Common myeloid progenitor, CD34-positive (primary cell): ENCODE measurements at regions of chr20 and their contacts with region 1.

Region 1: DNA sequence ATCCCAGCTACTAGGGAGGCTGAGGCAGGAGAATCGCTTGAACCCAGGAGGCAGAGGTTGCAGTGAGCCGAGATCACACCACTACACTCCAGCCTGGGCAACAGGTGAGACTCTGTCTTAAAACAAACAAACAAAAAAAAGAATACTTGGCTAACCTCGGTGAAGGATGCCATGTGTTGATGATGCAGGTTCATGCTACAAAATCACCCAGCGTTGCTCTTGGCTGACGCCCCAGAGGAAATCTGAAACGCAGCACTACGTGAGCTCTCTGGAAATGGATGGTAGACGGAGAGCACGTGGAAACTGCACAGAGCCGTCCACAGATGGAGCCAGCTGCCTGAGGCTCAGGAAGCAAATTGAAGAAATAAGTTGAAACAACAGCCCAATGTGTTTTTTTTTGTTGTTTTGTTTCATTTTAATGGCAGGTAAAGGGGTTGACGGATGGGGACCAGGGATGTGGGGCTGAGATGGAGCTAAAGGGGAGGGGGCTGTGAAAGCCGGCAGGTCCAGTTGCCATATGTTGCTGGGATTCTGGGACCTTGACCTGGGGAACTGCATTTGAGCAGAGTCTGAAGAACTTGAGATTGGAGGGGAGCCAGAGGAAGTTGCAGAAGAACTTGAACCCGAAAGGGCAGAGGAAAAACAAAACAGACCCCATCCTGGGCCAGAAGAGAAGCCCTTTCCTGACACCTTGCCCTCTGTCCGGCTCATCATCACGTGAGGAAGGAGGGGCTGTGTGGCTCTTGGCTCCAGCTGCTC is 12.8 kb upstream of the MANBAL start:
- DNase-seq: peak; percentile 72 to 87 (median 83)
- H3K4me3 ChIP-seq: peak overlapping the region in 3 of 7 experiments; percentile 36 to 57 (median 46)
- H3K27ac ChIP-seq: no peak overlapping the region
- H3K4me1 ChIP-seq: peaks cover 14 to 45% (median 33%) of the 10 kb centered on the region in 4 experiments
- H3K27me3 ChIP-seq: no peaks in the 10 kb centered on the region

Region 2: GRCh38 chr20:37095599-37096414 is 180.9 kb before region 1 on chr20 and contains the start of gene RBL1:
- CTCF ChIA-PET with region 1: no interaction called
- POLR2A ChIA-PET with region 1: no interaction called
- DNase-seq: peak; percentile 88 to 94 (median 92)
- H3K4me3 ChIP-seq: peak within 1 kb of the TSS; percentile 66 to 91 (median 76)
- H3K27ac ChIP-seq: peak within 1 kb of the TSS; percentile 81 to 89
- H3K4me1 ChIP-seq: peaks cover 0 to 25% (median 17%) of the 10 kb centered on the region in 4 experiments
- H3K27me3 ChIP-seq: no peaks in the 10 kb centered on the region

Region 3: GRCh38 chr20:37288091-37288490 is 11.4 kb after region 1 on chr20:
- CTCF ChIA-PET with region 1: interaction called, 39 read pairs
- POLR2A ChIA-PET with region 1: interaction called, 3 read pairs
- DNase-seq: peak in 1 of 3 donors; percentile 31
- H3K4me3 ChIP-seq: no peak overlapping the region
- H3K27ac ChIP-seq: no peak overlapping the region
- H3K4me1 ChIP-seq: peaks cover 0 to 24% (median 15%) of the 10 kb centered on the region in 4 experiments
- H3K27me3 ChIP-seq: no peaks in the 10 kb centered on the region

Region 4: GRCh38 chr20:37384683-37385174 is 108.1 kb after region 1 on chr20:
- CTCF ChIA-PET with region 1: interaction called, 14 read pairs
- POLR2A ChIA-PET with region 1: interaction called, 5 read pairs
- DNase-seq: peak; percentile 58 to 74 (median 72)
- H3K4me3 ChIP-seq: peak overlapping the region in 4 of 7 experiments; percentile 34 to 66 (median 58)
- H3K27ac ChIP-seq: no peak overlapping the region
- H3K4me1 ChIP-seq: peaks cover 0 to 29% (median 20%) of the 10 kb centered on the region in 4 experiments
- H3K27me3 ChIP-seq: no peaks in the 10 kb centered on the region

Region 5: DNA sequence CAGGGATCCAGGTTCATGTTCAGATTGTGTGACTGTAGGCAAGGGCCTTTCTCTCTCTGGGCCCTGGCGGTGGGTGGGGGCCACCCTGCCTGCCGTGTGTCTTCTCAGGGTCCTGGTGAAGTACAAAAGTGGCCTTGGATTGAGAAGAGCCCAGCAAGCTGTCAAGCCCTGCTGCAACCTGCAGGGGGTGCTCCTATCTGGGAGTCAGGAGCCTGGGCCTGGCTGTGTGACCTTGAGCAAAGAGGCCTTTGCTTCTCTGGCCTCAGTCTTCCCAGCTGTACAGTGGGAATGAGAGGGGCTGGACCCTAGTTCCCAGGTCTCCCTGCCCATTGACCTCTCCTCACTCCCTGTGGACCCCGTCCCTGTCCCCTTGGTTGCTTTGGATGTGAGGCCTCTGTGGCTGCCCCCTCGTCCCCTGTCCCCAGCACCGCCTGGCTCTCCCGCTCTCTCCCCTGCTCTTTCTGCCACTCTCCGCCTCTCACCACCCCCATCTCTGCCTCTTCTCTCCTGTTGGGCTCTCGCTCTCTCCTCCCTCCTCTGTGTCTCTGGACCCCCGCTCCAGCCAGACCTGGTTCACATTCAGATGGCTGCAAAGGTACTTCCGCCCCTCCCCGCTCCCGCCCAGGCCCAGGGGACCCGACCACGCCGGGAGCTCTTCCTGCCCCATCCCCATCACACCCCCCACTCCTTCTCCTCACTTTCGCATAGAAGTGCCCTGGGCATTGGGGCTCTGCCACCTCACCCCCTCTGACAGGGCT is 115.9 kb after region 1 on chr20:
- CTCF ChIA-PET with region 1: interaction called, 12 read pairs
- POLR2A ChIA-PET with region 1: no interaction called
- DNase-seq: peak in 1 of 3 donors; percentile 34
- H3K4me3 ChIP-seq: no peak overlapping the region
- H3K27ac ChIP-seq: no peak overlapping the region
- H3K4me1 ChIP-seq: peaks cover 0 to 23% (median 0%) of the 10 kb centered on the region in 4 experiments
- H3K27me3 ChIP-seq: no peaks in the 10 kb centered on the region